Heart left ventricle (tissue), 16 donors: ENCODE measurements at regions of chr1 and their contacts with region 1.

Region 1: GRCh38 chr1:45686317-45687013 is at the start of gene GPBP1L1:
- DNase-seq: peak; percentile 98 to 99 (median 98)
- ATAC-seq: peak; percentile 89 to 93 (median 92)
- H3K4me3 ChIP-seq: peak within 1 kb of the TSS; percentile 75 to 99 (median 93)
- H3K27ac ChIP-seq: peak within 1 kb of the TSS; percentile 91 to 99 (median 95)
- H3K4me1 ChIP-seq: peaks cover 6 to 55% (median 41%) of the 10 kb centered on the region in 12 donors
- H3K27me3 ChIP-seq: no peaks in the 10 kb centered on the region
- CTCF ChIP-seq: no peak
- POLR2A ChIP-seq: peak in 1 of 2 donors; percentile 76
- total RNA-seq, gene GPBP1L1: 73.8 to 94.2 (median 78.1) TPM

Region 2: GRCh38 chr1:45521398-45522323 is 164.8 kb before region 1 on chr1 and contains the start of gene PRDX1:
- intact Hi-C with region 1: loop called in 3 of 10 experiments (anchors 5 to 10 kb)
- DNase-seq: peak; percentile 97 to 99 (median 98)
- ATAC-seq: peak; percentile 93 to 98 (median 97)
- H3K4me3 ChIP-seq: peak within 1 kb of the TSS; percentile 69 to 99 (median 84)
- H3K27ac ChIP-seq: peak within 1 kb of the TSS; percentile 67 to 98 (median 94)
- H3K4me1 ChIP-seq: peaks cover 0 to 43% (median 16%) of the 10 kb centered on the region in 12 donors
- H3K27me3 ChIP-seq: no peaks in the 10 kb centered on the region
- CTCF ChIP-seq: peak in 3 of 12 donors; percentile 14 to 38 (median 24)
- POLR2A ChIP-seq: peak; percentile 68 to 99
- total RNA-seq, gene PRDX1: 249 to 501 (median 313) TPM

Region 3: DNA sequence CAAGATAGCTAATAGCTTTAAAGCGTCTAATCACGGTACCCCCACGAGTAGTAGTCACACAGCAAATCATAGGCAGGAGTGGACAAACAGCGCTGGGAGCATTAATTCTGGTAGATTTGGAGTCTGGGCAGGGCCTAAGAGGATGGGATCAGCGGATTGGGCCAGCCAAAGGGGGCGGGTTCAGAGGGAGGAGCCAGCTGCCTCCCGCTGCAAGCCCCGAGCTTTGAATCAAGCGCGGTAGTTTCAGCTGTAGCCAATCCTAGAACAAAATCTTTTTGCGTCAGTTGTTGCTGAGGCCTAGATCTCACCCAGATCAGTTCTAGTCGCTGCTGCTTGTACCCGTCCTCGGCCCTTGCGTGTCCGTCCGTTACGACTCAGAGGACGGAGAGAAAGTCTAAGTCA is 103.2 kb before region 1 on chr1:
- intact Hi-C with region 1: loop called in 6 of 10 experiments (anchors 5 to 10 kb)
- DNase-seq: peak; percentile 95 to 97 (median 96)
- ATAC-seq: peak; percentile 90 to 95 (median 94)
- H3K4me3 ChIP-seq: peak overlapping the region; percentile 78 to 99 (median 93)
- H3K27ac ChIP-seq: peak overlapping the region; percentile 81 to 96 (median 92)
- H3K4me1 ChIP-seq: peaks cover 0 to 37% (median 18%) of the 10 kb centered on the region in 12 donors
- H3K27me3 ChIP-seq: no peaks in the 10 kb centered on the region
- CTCF ChIP-seq: no peak
- POLR2A ChIP-seq: no peak

Region 4: GRCh38 chr1:45647248-45648021 is 39.0 kb before region 1 on chr1:
- intact Hi-C with region 1: loop called in 2 of 10 experiments (anchors 2 to 5 kb)
- DNase-seq: peak in 2 of 5 donors; percentile 25 to 29
- ATAC-seq: peak; percentile 83 to 90 (median 85)
- H3K4me3 ChIP-seq: peak overlapping the region in 2 of 12 donors; percentile 3 to 7
- H3K27ac ChIP-seq: peak overlapping the region in 10 of 12 donors; percentile 8 to 64 (median 40)
- H3K4me1 ChIP-seq: peaks cover 0 to 26% (median 11%) of the 10 kb centered on the region in 12 donors
- H3K27me3 ChIP-seq: no peaks in the 10 kb centered on the region
- CTCF ChIP-seq: no peak
- POLR2A ChIP-seq: no peak

Region 5: GRCh38 chr1:45750298-45751038 is 64.0 kb after region 1 on chr1 and contains the start of gene IPP:
- intact Hi-C with region 1: loop called in 3 of 10 experiments (anchors 1 to 5 kb)
- DNase-seq: peak; percentile 97 to 99 (median 98)
- ATAC-seq: peak; percentile 99 to 100 (median 99)
- H3K4me3 ChIP-seq: peak within 1 kb of the TSS; percentile 56 to 78 (median 66)
- H3K27ac ChIP-seq: peak within 1 kb of the TSS; percentile 87 to 100 (median 96)
- H3K4me1 ChIP-seq: peaks cover 0 to 19% (median 9%) of the 10 kb centered on the region in 12 donors
- H3K27me3 ChIP-seq: no peaks in the 10 kb centered on the region
- CTCF ChIP-seq: peak in 5 of 12 donors; percentile 13 to 54 (median 49)
- POLR2A ChIP-seq: peak; percentile 58 to 89
- total RNA-seq, gene IPP: 6.8 to 24.7 (median 17.1) TPM

Region 6: DNA sequence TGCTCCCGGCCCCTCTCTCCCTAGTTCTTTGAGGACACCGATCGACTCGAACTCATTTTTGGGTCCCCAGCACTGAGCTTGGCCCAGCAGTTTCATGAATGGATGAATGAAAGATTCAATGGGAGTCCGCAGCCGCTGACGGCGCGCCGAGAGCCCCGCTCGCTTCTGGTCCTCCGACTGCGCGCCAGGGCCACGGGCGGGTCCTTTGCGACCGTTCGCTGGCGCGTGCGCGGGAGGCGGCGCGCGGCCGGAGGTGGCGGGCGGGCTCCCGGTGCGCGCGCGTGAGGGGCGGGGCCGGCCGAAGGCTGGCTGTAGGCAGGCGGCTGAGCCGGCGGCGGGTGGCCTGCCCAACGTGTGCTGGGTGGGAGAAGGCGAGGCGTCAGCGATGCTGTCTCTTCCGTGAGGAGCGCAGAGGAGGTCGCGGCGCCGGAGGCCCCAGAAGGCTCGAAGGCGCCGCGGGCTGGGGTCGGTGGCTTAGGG is 116.9 kb after region 1 on chr1 and contains the start of gene MAST2:
- intact Hi-C with region 1: loop called in 2 of 10 experiments (anchors 2 to 5 kb)
- DNase-seq: peak; percentile 90 to 96 (median 92)
- ATAC-seq: peak; percentile 90 to 98 (median 96)
- H3K4me3 ChIP-seq: peak within 1 kb of the TSS; percentile 22 to 67 (median 61)
- H3K27ac ChIP-seq: peak within 1 kb of the TSS in 11 of 12 donors; percentile 44 to 87 (median 79)
- H3K4me1 ChIP-seq: peaks cover 0 to 27% (median 21%) of the 10 kb centered on the region in 12 donors
- H3K27me3 ChIP-seq: no peaks in the 10 kb centered on the region
- CTCF ChIP-seq: no peak
- POLR2A ChIP-seq: peak; percentile 15 to 82
- total RNA-seq, gene MAST2: 70.2 to 123 (median 79.7) TPM

Region 7: DNA sequence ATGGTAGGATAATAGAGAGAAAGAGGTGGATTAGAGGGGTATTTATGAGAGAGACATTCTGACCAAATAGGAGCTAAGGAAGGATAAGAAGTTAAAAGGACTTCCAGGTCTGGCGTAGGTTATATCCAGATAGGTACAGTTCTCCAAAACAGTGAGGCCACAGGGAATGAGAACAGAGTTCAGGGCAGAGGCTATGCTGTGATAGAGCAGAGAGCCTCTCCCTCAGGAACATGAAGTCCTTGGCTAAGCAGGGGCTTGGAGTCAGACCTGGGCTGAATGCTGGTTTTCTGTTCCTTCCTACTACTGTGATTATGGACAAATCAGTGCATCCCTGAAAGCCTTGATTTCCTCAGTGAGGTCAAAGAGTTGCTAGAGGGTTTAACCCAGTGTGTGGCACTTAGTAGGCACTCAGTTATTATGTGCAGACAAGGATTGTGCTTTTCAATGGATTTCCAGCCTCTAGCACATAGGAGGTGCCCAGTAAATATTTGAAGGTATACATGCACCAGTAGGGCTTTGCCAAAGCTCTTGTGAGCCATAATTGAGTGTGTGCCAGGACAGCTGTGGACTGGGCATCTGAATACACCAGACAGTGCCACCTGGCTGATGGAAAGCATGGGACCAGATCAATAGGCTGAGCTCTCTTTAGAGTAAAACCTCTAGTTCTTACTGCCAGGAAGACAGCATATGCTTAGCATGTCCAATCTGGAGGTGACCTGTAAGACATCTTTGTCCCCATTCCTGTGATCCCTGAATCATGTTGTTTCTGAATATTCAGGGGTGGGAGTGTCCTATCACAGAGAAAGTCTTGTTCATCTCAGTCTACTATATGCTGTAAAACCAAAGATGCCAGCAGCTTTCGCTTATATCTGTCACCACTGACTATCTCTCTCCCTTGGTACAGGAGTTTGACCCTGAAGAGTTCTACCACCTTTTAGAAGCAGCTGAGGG is 334.9 kb after region 1 on chr1:
- intact Hi-C with region 1: loop called in 1 of 10 experiments (anchors 2 kb)
- DNase-seq: no peak
- ATAC-seq: peak; percentile 28 to 44 (median 39)
- H3K4me3 ChIP-seq: no peak overlapping the region
- H3K27ac ChIP-seq: peak overlapping the region in 4 of 12 donors; percentile 9 to 53 (median 36)
- H3K4me1 ChIP-seq: peaks cover 0 to 47% (median 15%) of the 10 kb centered on the region in 12 donors
- H3K27me3 ChIP-seq: no peaks in the 10 kb centered on the region
- CTCF ChIP-seq: peak in 2 of 12 donors; percentile 16 to 24
- POLR2A ChIP-seq: no peak

Region 8: DNA sequence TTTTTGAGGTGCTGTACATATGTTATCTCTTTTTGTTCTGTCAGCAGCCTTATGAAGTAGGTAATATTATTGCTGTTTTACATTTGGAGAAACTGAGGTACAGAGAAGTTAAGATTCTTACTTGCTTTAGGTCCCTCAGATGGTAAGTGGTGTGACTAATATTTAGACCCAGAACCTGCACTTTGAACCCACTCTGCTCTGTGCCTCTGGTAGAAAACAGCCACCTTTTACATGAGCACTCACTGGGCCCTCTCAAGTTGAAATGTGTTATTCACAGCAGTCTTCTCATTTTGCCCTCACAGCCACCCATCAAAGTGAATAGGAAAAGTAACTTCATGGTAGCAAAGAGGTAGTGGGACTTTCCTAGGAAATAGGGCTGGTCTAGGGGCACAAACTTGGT is 658.8 kb after region 1 on chr1:
- intact Hi-C with region 1: no loop called
- DNase-seq: no peak
- ATAC-seq: no peak
- H3K4me3 ChIP-seq: no peak overlapping the region
- H3K27ac ChIP-seq: no peak overlapping the region
- H3K4me1 ChIP-seq: peaks cover 0 to 29% (median 10%) of the 10 kb centered on the region in 12 donors
- H3K27me3 ChIP-seq: no peaks in the 10 kb centered on the region
- CTCF ChIP-seq: no peak
- POLR2A ChIP-seq: no peak